Dorsolateral prefrontal cortex (tissue), 120 donors: ENCODE measurements at regions of chr17 and their contacts with region 1.

Region 1: GRCh38 chr17:39772987-39773934 is 35.5 kb downstream of the GRB7 start:
- DNase-seq: no peak
- H3K4me3 ChIP-seq: no peak overlapping the region
- H3K27ac ChIP-seq: peak overlapping the region in 55 of 59 donors; percentile 20 to 91 (median 74)
- H3K27me3 ChIP-seq: peaks cover 0 to 25% (median 0%) of the 10 kb centered on the region in 45 donors
- CTCF ChIP-seq: no peak

Region 2: GRCh38 chr17:39722965-39723848 is 50.1 kb before region 1 on chr17:
- intact Hi-C with region 1: no loop called
- DNase-seq: no peak
- H3K4me3 ChIP-seq: no peak overlapping the region
- H3K27ac ChIP-seq: no peak overlapping the region
- H3K27me3 ChIP-seq: no peaks in the 10 kb centered on the region
- CTCF ChIP-seq: no peak

Region 3: DNA sequence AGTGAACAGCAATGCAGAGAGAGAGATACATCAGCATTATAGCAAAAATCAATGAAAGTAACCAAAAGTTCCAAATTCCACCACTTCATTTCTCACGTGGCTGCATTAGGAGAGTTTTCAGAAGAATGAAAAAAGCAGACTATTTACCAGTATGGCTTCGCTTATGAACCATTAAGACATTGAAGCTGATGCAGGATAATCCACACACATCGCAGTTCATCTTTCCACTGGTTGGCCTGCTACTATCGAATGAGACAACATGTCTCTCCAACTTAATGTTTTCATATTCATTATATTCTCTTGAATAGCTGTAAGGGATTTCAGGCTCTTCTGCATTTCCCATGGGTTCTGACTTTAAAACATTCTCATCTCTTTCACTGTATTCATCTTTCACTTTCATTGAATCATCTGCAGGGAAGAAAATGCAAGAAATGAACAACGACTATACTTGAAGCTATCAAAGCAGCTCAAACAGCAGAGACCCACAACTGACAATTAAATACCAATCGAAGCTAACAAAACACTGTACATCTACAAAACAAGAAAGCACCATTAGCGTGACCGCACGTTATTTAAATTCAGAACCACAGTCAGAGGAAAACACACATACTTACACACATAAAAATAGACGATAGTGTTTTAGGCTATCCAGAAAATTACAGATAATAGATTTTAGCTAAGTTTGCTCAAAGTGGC is 19.4 kb after region 1 on chr17:
- intact Hi-C with region 1: loop called in 1 of 2 experiments (anchors 1 kb)
- DNase-seq: no peak
- H3K4me3 ChIP-seq: no peak overlapping the region
- H3K27ac ChIP-seq: peak overlapping the region in 44 of 59 donors; percentile 0 to 85 (median 50)
- H3K27me3 ChIP-seq: peaks cover 0 to 9% (median 0%) of the 10 kb centered on the region in 45 donors
- CTCF ChIP-seq: no peak

Region 4: DNA sequence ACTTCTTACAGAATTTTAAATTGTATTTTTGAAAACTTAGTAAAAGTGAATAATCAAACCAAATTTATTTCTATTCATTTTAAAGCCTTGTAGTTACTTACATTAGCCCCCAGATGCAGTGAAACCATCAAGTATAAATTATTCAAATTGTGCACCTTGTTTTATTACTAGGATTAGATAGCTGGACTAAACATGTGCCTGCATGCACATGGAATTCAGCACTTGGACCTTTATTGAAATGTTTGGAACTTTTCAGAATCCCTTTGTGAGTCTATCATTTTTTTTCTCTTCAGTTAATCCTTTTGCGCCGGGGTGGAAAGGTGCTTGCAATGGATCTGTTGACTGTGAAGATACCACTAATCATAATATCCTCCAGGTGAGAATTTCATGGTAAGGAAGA is 99.5 kb after region 1 on chr17:
- intact Hi-C with region 1: no loop called
- DNase-seq: no peak
- H3K4me3 ChIP-seq: no peak overlapping the region
- H3K27ac ChIP-seq: no peak overlapping the region
- H3K27me3 ChIP-seq: peaks cover 0 to 53% (median 11%) of the 10 kb centered on the region in 45 donors
- CTCF ChIP-seq: peak in 7 of 56 donors; percentile 5 to 35 (median 14)